Activated T-helper 2 cell treated with anti-CD3 and anti-CD28 coated beads, Interferon-gamma antibody, Interleukin-2, Interleukin-4, amounts not matched to agents 10 μg/mL and 5 μg/mL and 100 μg/mL, durations not matched to agents 14 hours and 24 hours and 36 hours (primary cell): ENCODE measurements at regions of chr4 and their contacts with region 1.

Region 1: GRCh38 chr4:110193822-110194761 is 4.3 kb downstream of the ELOVL6 start:
- DNase-seq: peak; percentile 80
- H3K4me3 Mint-ChIP-seq: peak overlapping the region; percentile 61
- H3K27ac Mint-ChIP-seq: peak overlapping the region; percentile 87
- H3K4me1 Mint-ChIP-seq: peaks cover 26% of the 10 kb centered on the region
- H3K27me3 Mint-ChIP-seq: no peaks in the 10 kb centered on the region

Region 2: GRCh38 chr4:109815151-109816081 is 378.7 kb before region 1 on chr4 and contains the start of gene GAR1:
- intact Hi-C with region 1: loop called (anchors 2 kb)
- DNase-seq: peak; percentile 89
- H3K4me3 Mint-ChIP-seq: peak within 1 kb of the TSS; percentile 100
- H3K27ac Mint-ChIP-seq: peak within 1 kb of the TSS; percentile 98
- H3K4me1 Mint-ChIP-seq: peaks cover 43% of the 10 kb centered on the region
- H3K27me3 Mint-ChIP-seq: no peaks in the 10 kb centered on the region
- total RNA-seq, gene GAR1: 43.6 and 44.8 TPM in 2 replicates

Region 3: GRCh38 chr4:110055158-110055768 is 138.8 kb before region 1 on chr4:
- intact Hi-C with region 1: loop called (anchors 1 kb)
- DNase-seq: peak; percentile 16
- H3K4me3 Mint-ChIP-seq: peak overlapping the region; percentile 18
- H3K27ac Mint-ChIP-seq: peak overlapping the region; percentile 48
- H3K4me1 Mint-ChIP-seq: peaks cover 45% of the 10 kb centered on the region
- H3K27me3 Mint-ChIP-seq: no peaks in the 10 kb centered on the region

Region 4: DNA sequence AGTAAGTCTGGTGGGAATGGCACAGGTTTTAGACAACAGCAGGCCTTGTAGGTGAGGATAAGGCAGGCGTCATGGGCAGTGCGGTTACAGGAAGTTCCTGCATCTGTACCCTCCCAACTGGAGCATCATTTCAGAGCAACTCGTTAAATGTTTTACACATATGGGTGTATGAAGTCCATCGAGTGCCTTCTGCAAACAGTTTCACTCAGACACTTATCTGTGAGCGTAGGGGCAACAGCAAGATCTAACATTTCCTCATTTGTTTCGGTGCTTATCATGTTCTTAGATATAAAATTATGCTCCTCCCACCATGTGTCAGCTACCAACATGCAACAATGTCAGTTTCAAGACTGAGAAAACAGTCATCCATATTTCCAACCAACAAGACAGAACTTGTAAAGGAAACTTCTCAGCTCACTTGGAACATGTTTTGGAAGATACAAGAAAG is 65.6 kb before region 1 on chr4:
- intact Hi-C with region 1: loop called (anchors 2 kb)
- DNase-seq: no peak
- H3K4me3 Mint-ChIP-seq: no peak overlapping the region
- H3K27ac Mint-ChIP-seq: no peak overlapping the region
- H3K4me1 Mint-ChIP-seq: peaks cover 33% of the 10 kb centered on the region
- H3K27me3 Mint-ChIP-seq: no peaks in the 10 kb centered on the region

Region 5: GRCh38 chr4:110270492-110271197 is 76.6 kb after region 1 on chr4:
- intact Hi-C with region 1: no loop called
- DNase-seq: no peak
- H3K4me3 Mint-ChIP-seq: no peak overlapping the region
- H3K27ac Mint-ChIP-seq: no peak overlapping the region
- H3K4me1 Mint-ChIP-seq: peaks cover 11% of the 10 kb centered on the region
- H3K27me3 Mint-ChIP-seq: peaks cover 10% of the 10 kb centered on the region

Region 6: GRCh38 chr4:110287130-110287529 is 93.0 kb after region 1 on chr4:
- intact Hi-C with region 1: loop called (anchors 5 kb)
- DNase-seq: no peak
- H3K4me3 Mint-ChIP-seq: no peak overlapping the region
- H3K27ac Mint-ChIP-seq: peak overlapping the region; percentile 69
- H3K4me1 Mint-ChIP-seq: peaks cover 13% of the 10 kb centered on the region
- H3K27me3 Mint-ChIP-seq: peaks cover 39% of the 10 kb centered on the region

Region 7: GRCh38 chr4:110335399-110335798 is 141.3 kb after region 1 on chr4:
- intact Hi-C with region 1: no loop called
- DNase-seq: no peak
- H3K4me3 Mint-ChIP-seq: no peak overlapping the region
- H3K27ac Mint-ChIP-seq: no peak overlapping the region
- H3K4me1 Mint-ChIP-seq: no peaks in the 10 kb centered on the region
- H3K27me3 Mint-ChIP-seq: peaks cover 20% of the 10 kb centered on the region